Lower lobe of right lung (tissue), 2 donors: ENCODE measurements at regions of chr15 and their contacts with region 1.

Region 1: DNA sequence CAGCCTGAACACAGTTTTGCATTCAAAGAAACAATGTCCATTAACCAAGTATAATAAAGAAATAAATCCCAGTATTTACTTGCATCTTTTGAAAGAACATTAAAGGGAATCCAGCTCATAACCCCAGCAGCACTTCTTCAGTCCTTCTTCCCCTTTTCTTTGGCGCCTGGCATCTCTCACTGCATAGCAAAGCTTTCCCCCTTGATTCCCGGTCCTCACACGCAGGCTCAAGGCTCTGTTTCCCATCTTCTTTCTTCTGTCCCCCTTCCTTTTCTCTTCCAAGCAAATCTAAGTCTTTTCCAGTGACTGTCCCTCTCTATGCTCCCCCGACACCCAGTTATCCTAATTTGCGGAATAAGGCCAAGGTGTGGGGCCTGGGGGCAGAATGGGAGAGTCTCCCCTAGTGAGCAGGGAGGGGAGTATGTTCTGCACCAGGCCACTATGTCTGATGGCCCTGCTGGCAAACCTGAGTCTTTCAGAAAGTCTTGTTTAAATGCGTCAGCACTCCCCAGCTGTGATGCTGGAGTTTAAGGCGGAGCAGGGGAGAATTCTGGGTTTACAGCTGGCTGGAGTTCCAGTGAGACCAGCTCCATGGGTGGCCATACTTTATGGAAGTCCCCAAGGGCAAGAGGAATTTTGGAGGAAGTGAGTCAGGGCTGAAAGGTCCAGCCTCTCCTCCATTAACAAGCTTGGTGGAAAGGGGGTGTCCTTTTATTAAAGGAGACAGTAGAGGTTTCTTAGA is 42.1 kb downstream of the GOLGA6A start:
- DNase-seq: no peak
- ATAC-seq: peak in 1 of 2 donors; percentile 18
- H3K4me3 ChIP-seq: no peak overlapping the region
- H3K27ac ChIP-seq: peak overlapping the region; percentile 67
- H3K4me1 ChIP-seq: peaks cover 41% of the 10 kb centered on the region
- H3K27me3 ChIP-seq: no peaks in the 10 kb centered on the region
- CTCF ChIP-seq: no peak

Region 2: GRCh38 chr15:73633111-73633990 is 406.9 kb before region 1 on chr15 and contains the start of gene NPTN:
- intact Hi-C with region 1: no loop called
- DNase-seq: peak; percentile 99
- ATAC-seq: peak; percentile 98
- H3K4me3 ChIP-seq: peak within 1 kb of the TSS; percentile 86
- H3K27ac ChIP-seq: peak within 1 kb of the TSS; percentile 94
- H3K4me1 ChIP-seq: peaks cover 61% of the 10 kb centered on the region
- H3K27me3 ChIP-seq: no peaks in the 10 kb centered on the region
- CTCF ChIP-seq: no peak
- total RNA-seq, gene NPTN: 138 TPM

Region 3: DNA sequence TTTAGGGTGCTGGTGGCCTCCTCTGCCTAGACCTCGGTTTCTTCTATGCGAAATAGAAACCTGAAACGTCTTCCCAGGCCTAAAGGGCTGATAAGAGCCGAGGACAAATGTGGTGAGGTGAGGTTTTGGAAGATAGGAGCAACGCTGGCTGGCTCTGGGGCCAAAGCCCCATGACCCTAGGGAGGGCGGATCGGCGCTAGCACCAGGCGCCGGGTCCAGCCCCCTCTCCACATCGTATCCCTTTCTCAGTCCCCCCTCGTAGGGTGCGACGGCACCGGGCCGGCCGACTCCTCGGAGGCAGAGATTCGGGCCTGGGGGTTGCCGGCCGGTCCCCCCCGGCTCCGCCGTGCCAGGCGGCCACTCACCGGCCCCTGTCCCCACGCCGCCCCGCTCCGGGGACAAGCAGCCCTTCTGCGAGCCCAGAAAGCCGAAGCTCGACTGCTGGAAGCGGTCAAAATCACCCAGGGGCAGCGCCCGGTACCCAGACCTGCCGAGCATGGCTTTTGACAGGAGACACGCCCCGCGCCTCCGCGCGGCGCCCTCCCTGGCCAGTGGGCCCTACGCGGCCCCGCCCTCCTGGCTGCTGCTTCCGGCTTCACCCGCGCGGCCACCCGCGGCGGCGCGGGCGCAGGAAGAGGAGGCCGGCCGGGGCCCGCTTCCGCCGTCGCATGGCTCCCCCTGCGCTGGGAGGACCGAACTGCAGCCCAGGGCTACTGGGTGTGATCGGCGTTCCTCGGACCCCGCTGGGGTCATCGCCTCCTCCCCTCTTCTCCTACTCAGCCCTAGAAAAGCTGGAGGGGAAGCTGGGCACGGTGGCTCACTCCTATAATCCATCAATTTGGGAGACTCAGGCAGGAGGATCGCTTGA is 48.3 kb before region 1 on chr15 and contains the start of gene STOML1:
- intact Hi-C with region 1: loop called (anchors 10 kb)
- DNase-seq: peak; percentile 97
- ATAC-seq: peak; percentile 93 to 95
- H3K4me3 ChIP-seq: peak within 1 kb of the TSS; percentile 89
- H3K27ac ChIP-seq: peak within 1 kb of the TSS; percentile 87
- H3K4me1 ChIP-seq: peaks cover 81% of the 10 kb centered on the region
- H3K27me3 ChIP-seq: no peaks in the 10 kb centered on the region
- CTCF ChIP-seq: peak; percentile 98
- total RNA-seq, gene STOML1: 16.3 TPM